Heart right ventricle (tissue), 16 donors: ENCODE measurements at regions of chr5 and their contacts with region 1.

Region 1: DNA sequence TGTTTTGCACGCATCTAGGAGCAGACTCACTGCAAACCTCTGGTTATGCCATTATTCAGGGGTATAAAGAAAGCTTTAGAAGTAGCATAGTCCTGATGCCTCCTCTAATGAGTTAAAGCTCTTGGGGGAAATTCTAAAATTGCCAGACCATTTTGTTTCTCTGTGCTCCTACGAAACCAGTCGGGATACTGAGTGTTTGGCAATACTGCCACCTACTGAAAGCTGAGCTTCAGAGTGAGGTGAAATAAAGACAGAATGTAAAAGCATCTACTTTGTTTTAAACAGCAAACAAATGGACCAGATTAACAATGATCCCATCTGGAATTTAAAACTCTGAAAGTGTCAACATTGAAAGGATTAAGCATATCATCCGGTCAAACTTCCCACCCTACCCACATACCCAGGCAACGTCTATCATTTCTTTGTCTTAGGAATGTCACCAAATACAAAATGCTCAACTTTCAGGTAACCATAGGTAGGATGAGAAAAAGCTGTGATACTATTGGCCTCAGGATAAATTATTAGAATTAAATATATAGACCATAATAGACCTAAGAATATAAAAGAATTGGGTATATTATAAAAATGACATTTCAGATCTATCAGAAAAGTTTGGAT is 77.8 kb upstream of the SHISAL2B start:
- DNase-seq: peak in 1 of 2 donors; percentile 54
- ATAC-seq: peak in 4 of 8 donors; percentile 46 to 68 (median 55)
- H3K4me3 ChIP-seq: no peak overlapping the region
- H3K27ac ChIP-seq: no peak overlapping the region
- H3K4me1 ChIP-seq: peaks cover 0 to 4% (median 0%) of the 10 kb centered on the region in 9 donors
- H3K27me3 ChIP-seq: peaks cover 0 to 3% (median 0%) of the 10 kb centered on the region in 7 donors
- CTCF ChIP-seq: peak; percentile 44 to 82 (median 74)

Region 2: GRCh38 chr5:64147849-64148441 is 464.5 kb before region 1 on chr5:
- intact Hi-C with region 1: loop called (anchors 2 to 10 kb)
- DNase-seq: peak; percentile 44 to 63
- ATAC-seq: peak; percentile 39 to 81 (median 65)
- H3K4me3 ChIP-seq: no peak overlapping the region
- H3K27ac ChIP-seq: no peak overlapping the region
- H3K4me1 ChIP-seq: peaks cover 3 to 28% (median 11%) of the 10 kb centered on the region in 9 donors
- H3K27me3 ChIP-seq: no peaks in the 10 kb centered on the region
- CTCF ChIP-seq: peak; percentile 40 to 88 (median 79)

Region 3: GRCh38 chr5:64229163-64229774 is 383.2 kb before region 1 on chr5:
- intact Hi-C with region 1: loop called (anchors 1 to 5 kb)
- DNase-seq: no peak
- ATAC-seq: peak in 1 of 8 donors; percentile 47
- H3K4me3 ChIP-seq: no peak overlapping the region
- H3K27ac ChIP-seq: no peak overlapping the region
- H3K4me1 ChIP-seq: no peaks in the 10 kb centered on the region
- H3K27me3 ChIP-seq: no peaks in the 10 kb centered on the region
- CTCF ChIP-seq: peak; percentile 49 to 79 (median 69)

Region 4: DNA sequence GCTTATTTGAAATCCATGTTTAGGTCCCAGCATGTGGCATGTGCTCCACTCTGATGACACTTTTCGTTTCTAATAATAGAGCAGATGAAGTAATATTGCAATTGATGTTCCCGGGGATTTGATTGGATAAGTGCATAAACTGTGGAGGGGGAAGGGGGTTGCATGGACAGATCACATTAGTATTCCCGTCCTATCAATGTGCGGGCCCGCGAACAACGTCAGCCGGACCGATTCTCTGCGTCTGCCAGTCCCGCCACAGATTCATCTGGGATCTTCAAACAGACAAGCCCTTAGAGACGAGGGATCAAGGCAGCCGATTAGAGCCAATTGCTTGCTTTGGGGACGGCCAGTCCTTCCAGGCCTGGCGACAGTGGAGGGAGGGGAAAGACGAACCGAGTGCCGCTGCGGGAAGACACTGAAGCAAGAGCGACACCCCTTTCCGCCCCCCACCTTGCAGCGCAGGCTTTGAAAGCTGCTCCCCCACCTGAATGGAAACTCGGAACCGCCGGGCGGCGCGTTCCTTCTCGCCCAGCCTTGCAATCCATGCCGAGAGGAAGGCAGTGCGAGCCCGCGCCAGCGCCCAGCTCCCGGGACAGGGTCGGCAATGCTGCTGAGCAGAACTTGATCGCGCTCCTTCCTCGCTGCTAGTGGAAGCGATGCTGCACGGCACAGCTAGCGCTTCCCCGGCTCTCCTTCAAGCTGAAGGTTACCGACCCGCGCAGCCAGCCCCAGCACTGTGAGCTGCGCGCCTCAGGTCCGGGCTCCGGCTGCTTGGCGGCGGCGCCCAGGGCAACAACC is 106.5 kb before region 1 on chr5 and contains the start of gene RGS7BP:
- intact Hi-C with region 1: loop called in 5 of 10 experiments (anchors 5 to 10 kb)
- DNase-seq: peak; percentile 23 to 60
- ATAC-seq: peak; percentile 86 to 98 (median 92)
- H3K4me3 ChIP-seq: peak within 1 kb of the TSS; percentile 41 to 67 (median 62)
- H3K27ac ChIP-seq: peak within 1 kb of the TSS in 5 of 10 donors; percentile 5 to 59 (median 48)
- H3K4me1 ChIP-seq: peaks cover 0 to 36% (median 7%) of the 10 kb centered on the region in 9 donors
- H3K27me3 ChIP-seq: peaks cover 0 to 47% (median 29%) of the 10 kb centered on the region in 7 donors
- CTCF ChIP-seq: peak in 3 of 9 donors; percentile 34 to 58 (median 35)
- total RNA-seq, gene RGS7BP: 0.81 to 3.1 (median 1.7) TPM

Region 5: DNA sequence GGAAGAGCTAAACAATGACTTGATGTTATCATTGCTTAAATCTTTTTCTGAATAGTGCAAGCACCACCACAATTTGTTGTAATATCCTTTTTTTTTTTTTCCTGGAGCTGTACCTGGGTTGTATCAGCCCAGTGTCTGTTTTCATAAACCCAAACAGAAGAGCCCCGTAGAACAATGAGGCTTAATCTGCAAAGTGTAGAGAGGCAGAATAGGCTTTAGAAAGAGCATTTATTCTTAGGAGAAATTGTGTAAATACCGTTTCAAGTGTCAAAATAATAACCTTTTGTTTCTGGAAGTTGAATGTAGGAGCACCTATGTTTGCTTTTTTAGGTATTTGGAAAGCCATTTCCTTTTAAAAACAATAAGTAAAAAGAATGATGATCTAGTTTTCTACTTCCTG is 80.2 kb before region 1 on chr5:
- intact Hi-C with region 1: no loop called
- DNase-seq: no peak
- ATAC-seq: no peak
- H3K4me3 ChIP-seq: no peak overlapping the region
- H3K27ac ChIP-seq: no peak overlapping the region
- H3K4me1 ChIP-seq: peaks cover 0 to 32% (median 5%) of the 10 kb centered on the region in 9 donors
- H3K27me3 ChIP-seq: no peaks in the 10 kb centered on the region
- CTCF ChIP-seq: no peak

Region 6: GRCh38 chr5:64773533-64773932 is 161.1 kb after region 1 on chr5:
- intact Hi-C with region 1: no loop called
- DNase-seq: no peak
- ATAC-seq: no peak
- H3K4me3 ChIP-seq: no peak overlapping the region
- H3K27ac ChIP-seq: no peak overlapping the region
- H3K4me1 ChIP-seq: peaks cover 2 to 26% (median 18%) of the 10 kb centered on the region in 9 donors
- H3K27me3 ChIP-seq: no peaks in the 10 kb centered on the region
- CTCF ChIP-seq: no peak